ENCODE measurements at regions of chr13 and their contacts with region 1.

Region 1: GRCh38 chr13:97030705-97031452 is 36.6 kb upstream of the OXGR1 start:
- DNase-seq: peak; percentile 2 to 66
- H3K4me3 ChIP-seq: no peak overlapping the region
- H3K27ac ChIP-seq: no peak overlapping the region
- H3K4me1 ChIP-seq: no peaks in the 10 kb centered on the region; the same call in 1 of the 2 replicates
- H3K27me3 ChIP-seq: no peaks in the 10 kb centered on the region
- CTCF ChIP-seq: peak; percentile 57

Region 2: DNA sequence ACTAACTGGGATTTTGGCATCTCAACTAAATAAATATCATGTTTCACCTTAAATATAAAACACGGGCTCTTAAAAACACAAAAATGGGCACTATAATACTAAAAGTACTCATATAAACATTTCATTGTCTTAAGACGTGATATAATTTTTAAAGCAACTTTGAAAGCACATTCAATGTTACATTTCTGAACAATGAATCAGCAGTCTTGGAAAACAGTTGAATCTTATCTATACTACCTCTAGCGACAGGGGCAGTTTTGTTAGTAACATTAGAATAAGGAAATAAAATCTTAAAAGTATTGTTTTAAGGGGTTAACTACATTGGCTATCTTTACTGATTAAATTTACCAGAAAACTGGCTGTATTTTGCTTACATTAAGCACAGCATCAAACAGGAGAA is 1134.6 kb before region 1 on chr13:
- CTCF ChIA-PET with region 1: no interaction called
- POLR2A ChIA-PET with region 1: no interaction called
- intact Hi-C with region 1: no loop called
- DNase-seq: no peak
- H3K4me3 ChIP-seq: no peak overlapping the region
- H3K27ac ChIP-seq: no peak overlapping the region
- H3K4me1 ChIP-seq: no peaks in the 10 kb centered on the region
- H3K27me3 ChIP-seq: no peaks in the 10 kb centered on the region
- CTCF ChIP-seq: no peak

Region 3: GRCh38 chr13:97212601-97213040 is 181.7 kb after region 1 on chr13:
- CTCF ChIA-PET with region 1: no interaction called
- POLR2A ChIA-PET with region 1: no interaction called
- intact Hi-C with region 1: loop called (anchors 2 kb)
- DNase-seq: peak; percentile 40 to 55
- H3K4me3 ChIP-seq: no peak overlapping the region
- H3K27ac ChIP-seq: peak overlapping the region; percentile 20; the same call in 1 of the 2 replicates
- H3K4me1 ChIP-seq: peaks cover 26% of the 10 kb centered on the region
- H3K27me3 ChIP-seq: no peaks in the 10 kb centered on the region
- CTCF ChIP-seq: peak; percentile 83

Region 4: GRCh38 chr13:97257800-97258799 is 227.2 kb after region 1 on chr13:
- CTCF ChIA-PET with region 1: no interaction called
- POLR2A ChIA-PET with region 1: no interaction called
- intact Hi-C with region 1: loop called (anchors 10 kb)
- DNase-seq: peak; percentile 71 to 100
- H3K4me3 ChIP-seq: peak overlapping the region; percentile 34
- H3K27ac ChIP-seq: peak overlapping the region; percentile 98
- H3K4me1 ChIP-seq: peaks cover 82% of the 10 kb centered on the region
- H3K27me3 ChIP-seq: no peaks in the 10 kb centered on the region
- CTCF ChIP-seq: peak; percentile 56; the same call in 1 of the 2 replicates

Region 5: GRCh38 chr13:97344265-97345175 is 313.6 kb after region 1 on chr13:
- CTCF ChIA-PET with region 1: no interaction called
- POLR2A ChIA-PET with region 1: no interaction called
- intact Hi-C with region 1: loop called (anchors 1 kb)
- DNase-seq: peak; percentile 43 to 50
- H3K4me3 ChIP-seq: no peak overlapping the region
- H3K27ac ChIP-seq: 0 out of 2 replicates have a peak overlapping the region, but pooled peaks have one; percentile 14
- H3K4me1 ChIP-seq: no peaks in the 10 kb centered on the region
- H3K27me3 ChIP-seq: no peaks in the 10 kb centered on the region
- CTCF ChIP-seq: peak; percentile 76

Region 6: GRCh38 chr13:97359181-97360057 is 328.5 kb after region 1 on chr13:
- CTCF ChIA-PET with region 1: no interaction called
- POLR2A ChIA-PET with region 1: no interaction called
- intact Hi-C with region 1: loop called (anchors 1 kb)
- DNase-seq: peak; percentile 43 to 68
- H3K4me3 ChIP-seq: no peak overlapping the region
- H3K27ac ChIP-seq: 0 out of 2 replicates have a peak overlapping the region, but pooled peaks have one; percentile 0
- H3K4me1 ChIP-seq: no peaks in the 10 kb centered on the region
- H3K27me3 ChIP-seq: no peaks in the 10 kb centered on the region
- CTCF ChIP-seq: peak; percentile 92